ENCODE measurements at regions of chr14 and their contacts with region 1.

Region 1: GRCh38 chr14:68497011-68497410 is 295.9 kb downstream of the ZFP36L1 start:
- DNase-seq: no peak
- H3K4me3 ChIP-seq: no peak overlapping the region
- H3K27ac ChIP-seq: no peak overlapping the region
- H3K4me1 ChIP-seq: peaks cover 4% of the 10 kb centered on the region
- H3K27me3 ChIP-seq: no peaks in the 10 kb centered on the region
- CTCF ChIP-seq: no peak

Region 2: DNA sequence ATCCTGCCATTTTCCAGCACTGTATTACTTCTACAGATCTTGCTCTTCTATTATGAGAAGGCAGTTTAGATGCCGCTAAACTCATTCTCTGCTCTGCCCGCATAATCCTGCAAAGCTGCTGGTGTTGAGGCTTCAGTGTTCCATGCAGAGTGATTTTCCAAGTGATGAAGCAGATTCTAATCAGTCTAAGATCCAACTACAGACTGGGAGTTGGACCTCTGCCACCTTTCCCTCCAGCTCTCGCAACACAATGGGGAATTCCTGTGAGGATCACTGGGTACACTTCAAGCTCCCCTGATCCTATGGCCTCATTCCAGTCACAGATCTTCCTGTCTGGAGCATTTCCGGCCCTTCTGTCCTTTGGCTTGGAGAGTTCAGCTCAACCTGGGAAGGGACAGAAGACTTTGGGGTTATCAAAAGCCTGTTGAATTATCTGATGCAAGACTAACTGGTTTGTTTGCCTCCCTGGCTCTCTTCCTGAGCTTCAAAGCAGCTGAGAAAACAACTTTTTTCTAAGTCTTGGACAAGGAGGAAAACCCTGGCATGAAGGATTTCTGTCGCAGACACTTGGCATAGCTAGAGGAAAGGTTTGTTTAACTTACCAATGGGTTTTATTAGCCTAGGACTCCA is 38.1 kb before region 1 on chr14:
- CTCF ChIA-PET with region 1: no interaction called
- POLR2A ChIA-PET with region 1: no interaction called
- intact Hi-C with region 1: loop called (anchors 1 kb)
- DNase-seq: peak; percentile 29
- H3K4me3 ChIP-seq: no peak overlapping the region
- H3K27ac ChIP-seq: no peak overlapping the region
- H3K4me1 ChIP-seq: peaks cover 12% of the 10 kb centered on the region
- H3K27me3 ChIP-seq: no peaks in the 10 kb centered on the region
- CTCF ChIP-seq: no peak

Measured in A673 (cell line).